Activated CD4-positive, alpha-beta memory T cell treated with anti-CD3 and anti-CD28 coated beads for 36 hours (primary cell): ENCODE measurements at regions of chr15 and their contacts with region 1.

Region 1: DNA sequence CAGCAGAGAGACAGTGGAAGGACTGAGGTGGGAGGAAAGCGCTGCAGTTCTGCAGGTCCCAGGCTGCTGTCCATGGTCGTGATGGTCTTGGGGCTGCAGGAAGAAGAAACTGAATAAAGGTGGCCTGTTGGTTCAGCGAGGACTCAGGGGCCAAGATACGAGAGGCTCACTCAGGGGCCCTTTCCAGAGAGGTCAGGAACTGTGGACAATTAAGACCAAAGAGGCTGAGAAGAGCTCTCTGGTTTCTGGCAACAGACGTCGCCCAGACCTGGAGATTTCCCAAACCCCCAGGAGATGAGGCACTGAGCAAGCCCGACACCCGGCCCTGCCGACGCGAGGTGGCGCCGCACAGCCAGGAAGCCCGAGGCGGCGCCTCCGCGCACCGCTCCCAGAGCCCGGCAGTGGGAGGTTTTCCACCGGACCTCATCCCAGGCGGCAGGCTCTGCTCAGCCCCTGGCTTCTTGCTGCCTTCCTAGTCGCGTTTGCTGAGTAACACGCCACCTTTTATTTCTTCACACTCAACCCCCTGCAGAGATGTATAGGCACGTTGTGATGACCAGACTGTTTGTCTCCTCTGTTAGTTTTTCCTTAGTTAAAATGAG is 56.4 kb upstream of the ARRDC4 start:
- DNase-seq: peak; percentile 20
- H3K4me3 Mint-ChIP-seq: no peak overlapping the region
- H3K27ac Mint-ChIP-seq: no peak overlapping the region
- H3K4me1 Mint-ChIP-seq: no peaks in the 10 kb centered on the region
- H3K27me3 Mint-ChIP-seq: peaks cover 19% of the 10 kb centered on the region

Region 2: DNA sequence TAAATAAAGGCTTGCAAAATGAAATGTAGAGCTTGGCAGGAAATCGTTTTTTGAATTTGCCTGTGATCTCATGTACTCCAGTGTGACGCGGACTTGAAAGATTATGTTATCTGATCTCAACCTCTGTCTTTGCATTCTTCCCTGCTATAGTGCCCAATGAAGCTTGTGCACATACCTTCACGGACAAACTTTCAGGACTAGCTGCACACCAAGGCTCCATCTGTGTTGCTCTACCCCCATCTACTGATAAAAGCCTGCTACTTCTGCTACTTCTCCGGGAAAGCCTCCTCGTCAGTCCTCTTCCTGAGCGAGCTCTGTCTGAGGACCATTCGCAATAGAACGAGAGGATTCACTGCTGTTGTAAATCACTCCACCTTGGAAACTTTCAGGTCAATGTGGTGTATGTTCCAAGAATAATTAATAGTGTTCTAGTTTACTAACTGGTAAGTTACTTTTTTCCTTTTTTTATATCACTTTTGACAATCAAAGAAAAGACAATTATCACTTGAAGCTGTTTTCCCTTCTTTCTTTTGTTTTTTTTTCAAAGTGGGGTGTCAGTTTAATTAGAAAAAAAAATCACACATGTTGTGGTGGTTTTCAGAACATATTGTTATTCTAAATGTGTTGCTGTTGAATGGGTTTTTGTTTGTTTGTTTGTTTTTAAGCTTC is 274.0 kb after region 1 on chr15:
- CTCF ChIA-PET with region 1: interaction called, 8 read pairs
- POLR2A ChIA-PET with region 1: no interaction called
- intact Hi-C with region 1: loop called (anchors 1 kb)
- DNase-seq: peak; percentile 24
- H3K4me3 Mint-ChIP-seq: no peak overlapping the region
- H3K27ac Mint-ChIP-seq: no peak overlapping the region
- H3K4me1 Mint-ChIP-seq: peaks cover 2% of the 10 kb centered on the region
- H3K27me3 Mint-ChIP-seq: peaks cover 10% of the 10 kb centered on the region